ENCODE measurements at regions of chr5 and their contacts with region 1.

Region 1: DNA sequence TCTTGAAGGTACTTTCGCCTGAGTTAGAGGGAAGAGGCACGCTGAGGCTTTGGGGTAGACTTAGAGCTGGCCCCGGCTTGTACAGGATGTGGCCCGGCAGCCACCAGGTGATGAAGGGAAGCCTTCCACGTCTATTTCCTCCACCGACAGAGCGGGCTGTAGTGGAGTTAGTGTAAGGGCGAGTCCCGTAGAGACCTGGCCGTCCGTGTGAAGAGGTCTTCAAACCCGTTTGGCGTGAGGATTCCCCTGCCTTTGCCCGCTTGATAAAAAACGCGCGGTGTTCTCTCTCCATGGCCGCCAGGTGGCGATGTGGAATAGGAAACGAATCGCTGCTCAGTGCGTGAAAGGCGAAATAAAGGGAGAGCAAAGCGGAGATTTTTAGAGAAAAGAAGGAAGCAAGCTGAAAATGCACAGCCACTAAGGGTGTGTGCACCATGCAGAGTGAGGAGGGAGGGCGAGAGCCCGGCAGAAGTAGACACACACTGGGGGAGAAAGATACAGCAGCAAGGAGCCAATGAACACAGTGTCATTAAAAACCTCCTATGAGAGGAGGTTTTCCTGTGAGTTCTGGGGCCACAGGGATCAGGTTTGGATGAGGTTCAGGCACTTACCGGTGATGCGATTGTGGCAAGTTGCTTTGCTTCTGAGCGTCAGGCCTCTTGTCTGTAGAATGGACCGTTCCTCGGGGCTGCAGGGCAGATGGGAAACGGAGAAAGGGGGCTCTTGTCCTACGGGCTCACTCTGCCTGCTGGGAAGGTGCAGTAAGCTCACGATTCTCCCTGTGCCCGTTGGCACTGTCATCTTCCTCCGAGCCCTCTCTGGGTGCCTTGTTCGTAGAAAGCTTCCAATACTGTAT is 34.2 kb downstream of the STC2 start:
- DNase-seq: peak; percentile 91
- ATAC-seq: peak; percentile 83
- H3K4me3 ChIP-seq: peak overlapping the region; percentile 49; the same call in 1 of the 2 replicates
- H3K27ac ChIP-seq: no peak overlapping the region
- H3K4me1 ChIP-seq: peaks cover 6% of the 10 kb centered on the region; the same call in 1 of the 2 replicates
- H3K27me3 ChIP-seq: no peaks in the 10 kb centered on the region
- CTCF ChIP-seq: peak; percentile 94

Region 2: GRCh38 chr5:173204185-173204979 is 89.7 kb before region 1 on chr5:
- CTCF ChIA-PET with region 1: no interaction called
- POLR2A ChIA-PET with region 1: no interaction called
- intact Hi-C with region 1: no loop called
- DNase-seq: peak; percentile 63
- ATAC-seq: no peak
- H3K4me3 ChIP-seq: no peak overlapping the region
- H3K27ac ChIP-seq: no peak overlapping the region
- H3K4me1 ChIP-seq: peaks cover 15% of the 10 kb centered on the region
- H3K27me3 ChIP-seq: peaks cover 9% of the 10 kb centered on the region; the same call in 1 of the 2 replicates
- CTCF ChIP-seq: peak; percentile 75

Region 3: GRCh38 chr5:173315495-173316350 is 21.7 kb after region 1 on chr5:
- CTCF ChIA-PET with region 1: interaction called, 6 read pairs
- POLR2A ChIA-PET with region 1: interaction called, 6 read pairs
- intact Hi-C with region 1: loop called (anchors 1 kb)
- DNase-seq: peak; percentile 57
- ATAC-seq: peak; percentile 46
- H3K4me3 ChIP-seq: no peak overlapping the region
- H3K27ac ChIP-seq: no peak overlapping the region
- H3K4me1 ChIP-seq: peaks cover 9% of the 10 kb centered on the region; the same call in 1 of the 2 replicates
- H3K27me3 ChIP-seq: no peaks in the 10 kb centered on the region
- CTCF ChIP-seq: no peak

Region 4: GRCh38 chr5:173573126-173573960 is 279.3 kb after region 1 on chr5:
- CTCF ChIA-PET with region 1: interaction called, 6 read pairs
- POLR2A ChIA-PET with region 1: no interaction called
- intact Hi-C with region 1: loop called (anchors 1 kb)
- DNase-seq: peak; percentile 86
- ATAC-seq: peak; percentile 94
- H3K4me3 ChIP-seq: peak overlapping the region; percentile 46; the same call in 1 of the 2 replicates
- H3K27ac ChIP-seq: no peak overlapping the region
- H3K4me1 ChIP-seq: peaks cover 11% of the 10 kb centered on the region
- H3K27me3 ChIP-seq: no peaks in the 10 kb centered on the region
- CTCF ChIP-seq: peak; percentile 97

Region 5: DNA sequence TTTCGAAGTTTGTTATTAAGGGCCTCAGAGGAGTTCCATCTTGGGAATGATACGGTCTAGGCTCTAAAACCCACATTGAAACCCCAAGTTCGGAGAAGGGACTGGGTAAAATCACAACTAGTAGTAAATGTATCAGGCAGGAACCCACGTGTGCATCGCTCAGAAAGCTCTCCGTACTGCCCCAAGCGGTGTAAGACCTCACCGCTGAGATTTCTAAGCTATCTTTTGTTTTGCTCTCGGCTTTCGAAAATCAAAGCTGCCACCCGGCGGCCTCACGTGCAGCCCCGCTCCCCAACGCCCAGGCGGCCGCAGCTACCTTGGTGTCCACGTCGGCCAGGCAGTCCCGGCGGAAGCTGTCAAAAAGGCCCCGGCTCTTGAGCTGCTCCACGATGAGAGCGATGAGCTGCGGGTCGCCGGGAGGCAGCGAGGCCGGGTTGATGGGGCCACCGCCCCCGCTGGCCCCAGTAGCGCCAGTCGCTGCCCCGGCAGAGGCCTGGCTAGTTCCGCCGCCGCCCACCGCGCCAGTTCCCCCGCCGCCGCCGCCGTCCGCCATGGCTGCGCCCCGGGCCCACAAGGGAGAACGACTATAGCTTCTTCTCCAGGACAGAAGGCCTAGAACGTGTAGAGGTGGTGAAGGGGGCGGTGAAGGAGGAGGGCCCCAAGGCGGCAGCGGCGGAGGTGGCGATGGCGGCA is 322.0 kb after region 1 on chr5:
- CTCF ChIA-PET with region 1: interaction called, 7 read pairs
- POLR2A ChIA-PET with region 1: no interaction called
- intact Hi-C with region 1: loop called (anchors 1 kb)
- DNase-seq: peak; percentile 79
- ATAC-seq: peak; percentile 62
- H3K4me3 ChIP-seq: peak overlapping the region; percentile 90
- H3K27ac ChIP-seq: peak overlapping the region; percentile 71
- H3K4me1 ChIP-seq: peaks cover 36% of the 10 kb centered on the region
- H3K27me3 ChIP-seq: no peaks in the 10 kb centered on the region
- CTCF ChIP-seq: peak; percentile 81

Region 6: GRCh38 chr5:173984218-173984617 is 690.2 kb after region 1 on chr5:
- CTCF ChIA-PET with region 1: interaction called, 4 read pairs
- POLR2A ChIA-PET with region 1: no interaction called
- intact Hi-C with region 1: loop called (anchors 1 kb)
- DNase-seq: peak; percentile 76
- ATAC-seq: peak; percentile 97
- H3K4me3 ChIP-seq: no peak overlapping the region
- H3K27ac ChIP-seq: no peak overlapping the region
- H3K4me1 ChIP-seq: no peaks in the 10 kb centered on the region
- H3K27me3 ChIP-seq: no peaks in the 10 kb centered on the region
- CTCF ChIP-seq: peak; percentile 94

Measured in PC-3 (cell line).